HCT116 (cell line): ENCODE measurements at regions of chr2 and their contacts with region 1.

Region 1: GRCh38 chr2:32161296-32161695 is 4.4 kb upstream of the SLC30A6 start:
- DNase-seq: no peak
- ATAC-seq: no peak
- H3K4me3 ChIP-seq: no peak overlapping the region
- H3K27ac ChIP-seq: no peak overlapping the region
- H3K4me1 ChIP-seq: 0 out of 4 replicates have a peak, but pooled peaks cover 4 to 6% of the 10 kb centered on the region in 2 experiments
- H3K27me3 ChIP-seq: no peaks in the 10 kb centered on the region
- CTCF ChIP-seq: no peak
- POLR2A ChIP-seq: no peak
- RAD21 ChIP-seq: no peak

Region 2: DNA sequence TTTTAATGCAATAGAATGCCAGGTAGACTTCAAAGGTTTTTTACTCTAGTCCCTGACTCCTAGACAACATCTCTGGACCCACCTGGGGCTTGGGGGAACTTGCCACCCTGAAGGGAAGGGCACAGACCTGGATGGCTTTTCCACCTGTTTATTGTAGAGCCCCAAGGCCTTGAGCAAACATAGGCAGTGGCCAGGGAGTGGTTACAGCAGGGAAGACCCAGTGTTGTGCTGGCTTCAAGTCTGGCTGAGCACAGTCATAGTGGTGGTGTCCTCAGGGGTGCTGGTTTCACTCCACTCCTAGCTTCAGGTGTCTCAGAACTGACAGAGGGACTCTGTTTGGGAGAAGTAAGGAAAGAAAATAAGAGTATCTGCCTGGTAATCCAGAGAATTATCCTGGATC is 575.1 kb before region 1 on chr2:
- CTCF ChIA-PET with region 1: no interaction called
- POLR2A ChIA-PET with region 1: no interaction called
- RAD21 ChIA-PET with region 1: no interaction called
- intact Hi-C with region 1: no loop called
- DNase-seq: no peak
- ATAC-seq: no peak
- H3K4me3 ChIP-seq: no peak overlapping the region
- H3K27ac ChIP-seq: no peak overlapping the region
- H3K4me1 ChIP-seq: no peaks in the 10 kb centered on the region
- H3K27me3 ChIP-seq: 0 out of 2 replicates have a peak, but pooled peaks cover 8% of the 10 kb centered on the region
- CTCF ChIP-seq: no peak
- POLR2A ChIP-seq: no peak
- RAD21 ChIP-seq: no peak

Region 3: GRCh38 chr2:31886697-31887096 is 274.6 kb before region 1 on chr2:
- CTCF ChIA-PET with region 1: no interaction called
- POLR2A ChIA-PET with region 1: no interaction called
- RAD21 ChIA-PET with region 1: no interaction called
- intact Hi-C with region 1: loop called (anchors 10 kb)
- DNase-seq: peak; percentile 22
- ATAC-seq: peak; percentile 88
- H3K4me3 ChIP-seq: no peak overlapping the region
- H3K27ac ChIP-seq: no peak overlapping the region
- H3K4me1 ChIP-seq: no peaks in the 10 kb centered on the region
- H3K27me3 ChIP-seq: no peaks in the 10 kb centered on the region
- CTCF ChIP-seq: peak; percentile 19 to 72 (median 62); a peak in 4 of 6 replicates
- POLR2A ChIP-seq: no peak
- RAD21 ChIP-seq: peak; percentile 46

Region 4: GRCh38 chr2:32051836-32052439 is 109.4 kb before region 1 on chr2:
- CTCF ChIA-PET with region 1: no interaction called
- POLR2A ChIA-PET with region 1: no interaction called
- RAD21 ChIA-PET with region 1: no interaction called
- intact Hi-C with region 1: no loop called
- DNase-seq: no peak
- ATAC-seq: no peak
- H3K4me3 ChIP-seq: no peak overlapping the region
- H3K27ac ChIP-seq: no peak overlapping the region
- H3K4me1 ChIP-seq: no peaks in the 10 kb centered on the region
- H3K27me3 ChIP-seq: no peaks in the 10 kb centered on the region
- CTCF ChIP-seq: no peak
- POLR2A ChIP-seq: no peak
- RAD21 ChIP-seq: no peak